Activated CD8-positive, alpha-beta T cell treated with anti-CD3 and anti-CD28 coated beads for 36 hours (primary cell): ENCODE measurements at regions of chr3 and their contacts with region 1.

Region 1: DNA sequence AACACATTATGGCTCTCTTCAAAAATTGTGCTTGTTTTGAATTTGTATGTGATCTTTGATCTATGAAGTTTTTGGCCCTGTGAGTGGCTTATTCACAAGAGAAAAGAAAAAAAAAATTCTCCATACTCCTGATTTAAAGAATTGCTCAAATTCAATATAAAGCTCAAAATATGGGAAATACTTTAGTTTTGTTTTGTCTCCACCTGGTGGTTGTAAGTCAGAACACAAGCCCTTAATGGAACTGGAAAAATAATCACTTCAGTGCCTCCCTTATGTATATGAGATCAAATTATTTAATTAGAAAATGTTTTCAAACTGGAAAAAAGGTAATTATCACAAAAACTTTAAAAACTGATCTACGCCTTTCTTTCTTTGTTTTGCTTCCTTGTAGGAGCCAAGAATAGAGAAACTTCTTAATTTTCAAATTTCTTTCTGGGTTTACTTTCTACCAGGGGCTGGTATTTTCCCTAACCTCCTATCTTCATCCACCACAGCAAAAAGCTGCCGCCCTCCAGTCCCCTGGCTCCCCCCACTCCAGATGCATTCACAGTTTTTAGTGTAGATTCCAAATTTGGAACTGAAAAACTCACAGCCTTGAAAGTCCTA is 50.6 kb downstream of the SERP1 start:
- DNase-seq: no peak
- ATAC-seq: no peak
- H3K4me3 Mint-ChIP-seq: no peak overlapping the region
- H3K27ac Mint-ChIP-seq: no peak overlapping the region
- H3K4me1 Mint-ChIP-seq: no peaks in the 10 kb centered on the region
- H3K27me3 Mint-ChIP-seq: no peaks in the 10 kb centered on the region
- CTCF ChIP-seq: peak; percentile 81

Region 2: GRCh38 chr3:149969940-149970715 is 525.5 kb before region 1 on chr3:
- CTCF ChIA-PET with region 1: no interaction called
- POLR2A ChIA-PET with region 1: no interaction called
- intact Hi-C with region 1: loop called (anchors 10 kb)
- DNase-seq: peak; percentile 89
- ATAC-seq: peak; percentile 74
- H3K4me3 Mint-ChIP-seq: peak overlapping the region; percentile 84
- H3K27ac Mint-ChIP-seq: peak overlapping the region; percentile 59
- H3K4me1 Mint-ChIP-seq: peaks cover 16% of the 10 kb centered on the region
- H3K27me3 Mint-ChIP-seq: peaks cover 18% of the 10 kb centered on the region
- CTCF ChIP-seq: no peak

Region 3: DNA sequence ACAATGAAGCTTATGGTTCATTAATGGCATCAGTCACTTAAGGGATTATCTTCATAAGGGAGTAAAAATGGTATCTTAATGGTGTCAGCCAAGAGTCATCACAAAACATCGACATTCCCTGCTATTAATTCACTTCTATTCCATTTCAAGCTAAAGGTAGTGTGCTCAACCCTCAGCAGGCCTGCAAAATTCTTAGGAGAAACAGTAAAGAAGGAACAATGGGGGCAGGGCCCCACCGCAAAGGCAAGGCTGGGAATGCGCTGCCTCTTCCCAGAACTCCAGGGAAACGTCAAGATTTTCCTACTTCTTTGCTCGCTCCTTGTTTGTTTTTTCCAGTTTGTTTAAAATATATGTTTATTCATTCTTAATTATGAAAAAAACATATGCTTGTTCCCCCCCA is 274.9 kb before region 1 on chr3:
- CTCF ChIA-PET with region 1: interaction called, 46 read pairs
- POLR2A ChIA-PET with region 1: no interaction called
- intact Hi-C with region 1: loop called (anchors 5 kb)
- DNase-seq: no peak
- ATAC-seq: no peak
- H3K4me3 Mint-ChIP-seq: no peak overlapping the region
- H3K27ac Mint-ChIP-seq: no peak overlapping the region
- H3K4me1 Mint-ChIP-seq: peaks cover 2% of the 10 kb centered on the region
- H3K27me3 Mint-ChIP-seq: peaks cover 29% of the 10 kb centered on the region
- CTCF ChIP-seq: no peak

Region 4: DNA sequence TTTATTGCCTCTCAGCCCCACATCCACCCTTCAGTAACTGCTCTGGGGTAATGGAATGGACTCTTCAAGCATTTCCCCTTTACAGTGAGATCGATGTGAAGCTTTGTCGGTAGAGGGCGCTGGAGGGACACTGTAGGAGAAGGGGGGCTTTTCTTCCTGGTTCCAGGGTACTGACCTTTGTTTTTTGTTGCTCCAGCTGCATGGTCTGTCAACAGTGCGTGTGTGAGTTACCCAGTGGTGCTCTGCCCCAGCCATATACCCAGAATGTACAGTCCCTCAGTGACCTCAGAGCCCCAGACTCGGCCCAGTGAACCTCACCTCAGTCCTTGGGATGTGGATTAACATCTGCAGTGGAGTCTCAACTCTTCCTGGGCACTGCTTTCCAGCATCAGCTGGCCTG is 267.8 kb before region 1 on chr3:
- CTCF ChIA-PET with region 1: interaction called, 46 read pairs
- POLR2A ChIA-PET with region 1: no interaction called
- intact Hi-C with region 1: loop called (anchors 5 kb)
- DNase-seq: peak; percentile 78
- ATAC-seq: peak; percentile 77
- H3K4me3 Mint-ChIP-seq: no peak overlapping the region
- H3K27ac Mint-ChIP-seq: no peak overlapping the region
- H3K4me1 Mint-ChIP-seq: no peaks in the 10 kb centered on the region
- H3K27me3 Mint-ChIP-seq: peaks cover 18% of the 10 kb centered on the region
- CTCF ChIP-seq: peak; percentile 75

Region 5: DNA sequence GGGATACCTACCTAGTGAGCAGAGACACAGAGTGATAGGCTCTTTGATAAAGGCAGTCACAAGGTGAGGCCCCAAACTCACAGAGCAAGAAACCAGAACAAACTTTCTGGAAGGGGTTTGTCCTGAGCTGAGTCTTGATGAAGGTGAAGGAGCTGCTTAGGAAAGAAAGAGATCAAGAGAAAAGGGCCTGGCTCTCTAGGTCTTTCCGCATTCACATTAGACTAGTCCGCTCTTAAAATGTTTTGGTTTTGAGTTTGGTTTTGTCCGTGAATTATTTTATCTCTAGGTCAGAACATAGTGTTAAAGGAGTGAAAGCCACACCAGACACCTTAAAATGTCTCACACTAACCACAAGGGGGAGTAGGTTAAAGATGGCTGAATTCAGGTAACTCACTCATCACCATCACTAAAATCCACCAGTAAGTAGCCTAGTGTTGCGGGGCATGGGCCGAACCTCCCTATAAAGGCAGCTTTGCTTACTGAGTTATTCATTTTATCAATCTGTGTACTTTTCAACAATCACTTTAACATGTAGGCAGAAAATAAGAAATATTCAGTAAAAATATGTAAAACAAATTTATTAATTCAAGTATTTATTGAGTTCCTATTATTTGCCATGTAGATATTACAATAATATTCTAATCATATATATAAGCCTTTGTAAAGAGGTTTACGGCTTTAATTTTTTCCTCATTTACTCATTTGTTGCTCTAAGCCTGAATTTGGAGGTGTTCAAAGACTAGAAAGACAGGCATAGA is 209.1 kb before region 1 on chr3:
- CTCF ChIA-PET with region 1: interaction called, 25 read pairs
- POLR2A ChIA-PET with region 1: interaction called, 3 read pairs
- intact Hi-C with region 1: loop called (anchors 1 kb)
- DNase-seq: peak; percentile 3
- ATAC-seq: peak; percentile 74
- H3K4me3 Mint-ChIP-seq: no peak overlapping the region
- H3K27ac Mint-ChIP-seq: no peak overlapping the region
- H3K4me1 Mint-ChIP-seq: peaks cover 3% of the 10 kb centered on the region
- H3K27me3 Mint-ChIP-seq: peaks cover 19% of the 10 kb centered on the region
- CTCF ChIP-seq: peak; percentile 56

Region 6: GRCh38 chr3:150462108-150462507 is 33.6 kb before region 1 on chr3:
- CTCF ChIA-PET with region 1: no interaction called
- POLR2A ChIA-PET with region 1: no interaction called
- intact Hi-C with region 1: no loop called
- DNase-seq: no peak
- ATAC-seq: no peak
- H3K4me3 Mint-ChIP-seq: no peak overlapping the region
- H3K27ac Mint-ChIP-seq: no peak overlapping the region
- H3K4me1 Mint-ChIP-seq: no peaks in the 10 kb centered on the region
- H3K27me3 Mint-ChIP-seq: no peaks in the 10 kb centered on the region
- CTCF ChIP-seq: no peak

Region 7: DNA sequence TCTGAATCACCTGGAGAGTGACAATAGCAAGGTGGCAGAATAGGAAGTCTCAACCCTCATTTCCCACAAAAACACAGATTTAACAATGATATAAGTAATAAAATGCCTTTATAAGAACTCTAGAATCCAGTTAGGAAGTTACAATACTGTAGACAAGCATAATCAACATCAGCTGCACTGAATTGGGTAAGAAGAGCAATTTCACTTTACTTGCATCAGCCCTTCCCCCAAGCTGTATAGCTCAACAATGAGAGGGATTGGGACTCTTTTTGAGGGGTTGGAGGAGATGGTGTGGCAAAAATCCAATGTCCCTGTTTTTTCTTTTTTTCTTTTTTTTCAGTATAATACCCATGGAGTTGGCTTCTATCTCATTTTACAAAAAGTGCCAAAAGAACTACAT is 12.4 kb before region 1 on chr3:
- CTCF ChIA-PET with region 1: interaction called, 20 read pairs
- POLR2A ChIA-PET with region 1: no interaction called
- intact Hi-C with region 1: no loop called
- DNase-seq: no peak
- ATAC-seq: no peak
- H3K4me3 Mint-ChIP-seq: no peak overlapping the region
- H3K27ac Mint-ChIP-seq: no peak overlapping the region
- H3K4me1 Mint-ChIP-seq: no peaks in the 10 kb centered on the region
- H3K27me3 Mint-ChIP-seq: no peaks in the 10 kb centered on the region
- CTCF ChIP-seq: no peak